ENCODE measurements at regions of chr20 and their contacts with region 1.

Region 1: DNA sequence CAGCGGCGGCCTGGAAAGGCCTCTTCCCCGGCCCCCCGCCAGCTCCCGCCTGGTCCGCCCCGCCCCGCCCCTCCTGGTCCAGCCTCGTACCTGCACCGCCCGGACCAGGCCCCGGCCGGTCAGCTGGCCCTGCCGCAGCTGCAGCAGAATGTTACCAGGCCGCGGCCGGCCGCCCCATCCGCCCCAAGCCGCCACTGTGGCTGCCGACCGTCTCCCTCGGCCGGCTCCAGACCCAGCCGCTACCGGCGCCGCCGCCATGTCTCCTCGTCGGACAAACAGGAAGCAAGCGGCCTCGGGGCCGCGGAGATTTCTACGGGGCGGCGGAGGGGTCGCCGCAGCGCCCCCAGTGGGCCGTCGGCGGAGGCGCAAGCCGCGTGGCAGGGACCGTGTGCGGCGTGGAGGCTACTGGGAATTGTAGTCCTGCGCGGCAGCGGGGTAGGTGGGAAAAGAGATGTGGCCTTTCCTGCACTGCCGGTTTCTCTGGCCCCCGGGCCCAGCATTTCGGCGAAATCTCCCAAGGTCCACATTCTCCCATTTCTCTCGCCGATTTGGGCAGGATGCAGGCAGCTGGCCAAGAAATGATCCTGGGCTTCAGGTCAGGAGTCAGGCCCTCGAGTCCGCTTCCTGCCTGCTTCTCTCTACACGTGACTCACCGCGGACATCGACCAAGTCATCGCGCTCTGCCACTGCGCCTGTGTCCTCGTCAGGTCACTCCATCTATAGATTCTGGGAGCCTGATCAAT is at the start of gene TRPC4AP:
- DNase-seq: no peak
- H3K4me3 ChIP-seq: peak within 1 kb of the TSS; percentile 83
- CTCF ChIP-seq: peak; percentile 93

Region 2: DNA sequence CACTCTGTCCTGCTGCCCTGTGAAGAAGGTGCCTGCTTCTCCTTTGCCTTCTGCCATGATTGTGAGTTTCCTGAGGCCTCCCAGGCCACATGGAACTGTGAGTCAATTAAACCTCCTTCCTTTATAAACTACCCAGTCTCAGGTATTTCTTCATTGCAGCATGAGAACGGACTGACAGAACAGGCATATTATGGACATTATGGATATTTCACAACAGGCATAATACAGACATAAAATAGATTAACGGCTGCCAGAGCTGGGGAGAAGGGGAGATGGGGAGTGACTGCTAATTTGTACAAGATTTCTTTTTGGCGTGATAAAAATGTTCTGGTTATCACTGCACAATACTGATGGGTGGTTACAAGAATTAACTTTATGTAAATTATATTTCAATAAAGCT is 29.5 kb before region 1 on chr20:
- CTCF ChIA-PET with region 1: interaction called, 12 read pairs
- POLR2A ChIA-PET with region 1: no interaction called
- DNase-seq: no peak
- H3K4me3 ChIP-seq: no peak overlapping the region
- CTCF ChIP-seq: no peak

Region 3: GRCh38 chr20:35120012-35120701 is 27.5 kb after region 1 on chr20:
- CTCF ChIA-PET with region 1: interaction called, 159 read pairs
- POLR2A ChIA-PET with region 1: no interaction called
- DNase-seq: peak; percentile 31
- H3K4me3 ChIP-seq: no peak overlapping the region
- CTCF ChIP-seq: no peak

Region 4: GRCh38 chr20:35146920-35147574 is 54.4 kb after region 1 on chr20 and contains the start of gene EDEM2:
- CTCF ChIA-PET with region 1: interaction called, 85 read pairs
- POLR2A ChIA-PET with region 1: interaction called, 5 read pairs
- DNase-seq: peak; percentile 75
- H3K4me3 ChIP-seq: peak within 1 kb of the TSS; percentile 95
- CTCF ChIP-seq: peak; percentile 8

Region 5: GRCh38 chr20:35207950-35208611 is 115.4 kb after region 1 on chr20:
- CTCF ChIA-PET with region 1: interaction called, 119 read pairs
- POLR2A ChIA-PET with region 1: no interaction called
- DNase-seq: peak; percentile 10
- H3K4me3 ChIP-seq: no peak overlapping the region; the same call in 1 of the 2 replicates
- CTCF ChIP-seq: peak; percentile 60

Region 6: GRCh38 chr20:35269055-35269781 is 176.5 kb after region 1 on chr20:
- CTCF ChIA-PET with region 1: interaction called, 109 read pairs
- POLR2A ChIA-PET with region 1: interaction called, 3 read pairs
- DNase-seq: no peak
- H3K4me3 ChIP-seq: no peak overlapping the region
- CTCF ChIP-seq: peak; percentile 95

Region 7: GRCh38 chr20:35447082-35447789 is 354.5 kb after region 1 on chr20:
- CTCF ChIA-PET with region 1: interaction called, 10 read pairs
- POLR2A ChIA-PET with region 1: no interaction called
- DNase-seq: no peak
- H3K4me3 ChIP-seq: peak overlapping the region; percentile 23; the same call in 1 of the 2 replicates
- CTCF ChIP-seq: peak; percentile 91